CD8-positive, alpha-beta T cell (primary cell): ENCODE measurements at regions of chr2 and their contacts with region 1.

Region 1: DNA sequence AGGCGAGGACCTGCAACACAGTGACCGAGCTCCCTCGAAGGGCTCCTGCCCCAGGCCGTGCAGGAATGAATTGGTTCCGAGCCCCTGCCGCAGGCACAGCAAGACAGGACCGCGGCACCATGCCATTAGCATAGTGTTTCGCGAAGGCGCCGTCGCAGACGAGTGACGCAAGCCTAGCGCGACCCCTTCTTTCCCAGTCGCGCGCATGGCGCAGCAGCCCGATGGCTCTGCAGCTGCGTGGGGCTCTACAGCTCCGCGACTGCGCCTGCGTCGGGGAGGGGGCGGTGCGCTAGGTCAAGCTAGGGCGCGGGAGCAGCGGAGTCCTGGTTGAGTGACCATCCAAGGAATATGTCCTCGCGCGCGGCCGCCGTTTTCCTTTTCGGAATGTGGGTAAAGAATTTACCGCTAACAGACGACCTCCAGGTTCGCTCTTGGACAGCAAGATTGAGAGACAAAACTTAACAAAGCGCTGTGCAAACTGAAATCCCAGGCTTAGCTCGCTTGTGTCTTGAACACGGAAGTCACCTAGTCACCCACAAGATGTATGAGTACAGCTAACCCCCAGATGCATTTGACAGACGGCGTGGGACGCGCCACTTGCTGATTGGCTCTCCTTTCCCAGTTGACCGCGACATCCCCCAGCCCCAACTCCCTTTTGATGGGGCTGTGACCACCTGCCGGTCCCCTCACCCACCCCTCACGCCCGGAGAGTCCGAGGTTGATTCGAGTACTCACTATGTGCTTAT is at the start of gene TRMT61B:
- DNase-seq: peak; percentile 89 to 99 (median 97)
- ATAC-seq: peak; percentile 96
- H3K4me3 ChIP-seq: peak within 1 kb of the TSS; percentile 89 to 98
- H3K4me3 Mint-ChIP-seq: peak within 1 kb of the TSS; percentile 94
- H3K27ac ChIP-seq: peak within 1 kb of the TSS; percentile 94 to 95
- H3K27ac Mint-ChIP-seq: peak within 1 kb of the TSS; percentile 99
- H3K4me1 ChIP-seq: peaks cover 28% of the 10 kb centered on the region
- H3K4me1 Mint-ChIP-seq: peaks cover 33% of the 10 kb centered on the region
- H3K27me3 ChIP-seq: no peaks in the 10 kb centered on the region
- H3K27me3 Mint-ChIP-seq: no peaks in the 10 kb centered on the region
- CTCF ChIP-seq: no peak
- total RNA-seq, gene TRMT61B: 17.9 to 22.9 TPM

Region 2: DNA sequence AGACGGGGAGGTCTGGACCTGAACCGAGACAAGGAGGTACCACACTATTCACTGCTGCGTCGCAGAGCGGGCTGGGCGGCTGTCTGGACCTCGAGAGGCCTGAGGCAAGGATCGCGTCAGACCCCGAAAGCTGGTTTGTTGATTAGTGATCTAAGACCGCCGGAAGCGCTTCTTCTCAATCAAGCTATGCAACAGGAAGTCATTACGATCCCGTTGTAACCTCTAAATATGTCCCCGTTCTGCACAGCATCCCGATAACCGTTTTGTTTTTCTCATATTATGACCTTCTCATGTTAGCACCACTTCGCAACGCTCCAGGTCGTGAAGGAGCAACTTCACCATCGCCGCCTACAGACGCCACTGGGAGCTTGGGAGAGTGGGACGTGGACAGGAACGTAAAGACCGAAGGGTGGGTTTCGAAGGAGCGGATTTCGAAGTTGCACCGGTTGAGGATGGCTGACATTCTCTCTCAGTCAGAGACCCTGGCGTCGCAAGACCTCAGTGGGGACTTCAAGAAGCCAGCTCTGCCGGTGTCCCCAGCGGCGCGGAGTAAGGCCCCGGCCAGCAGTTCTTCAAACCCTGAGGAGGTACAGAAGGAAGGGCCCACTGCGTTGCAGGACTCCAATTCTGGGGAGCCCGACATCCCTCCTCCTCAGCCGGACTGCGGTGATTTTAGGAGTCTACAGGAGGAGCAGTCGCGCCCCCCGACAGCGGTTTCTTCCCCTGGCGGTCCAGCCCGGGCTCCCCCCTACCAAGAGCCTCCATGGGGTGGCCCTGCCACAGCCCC is 1206.7 kb before region 1 on chr2 and contains the starts of genes SLC4A1AP and SUPT7L:
- CTCF ChIA-PET with region 1: no interaction called
- POLR2A ChIA-PET with region 1: no interaction called
- intact Hi-C with region 1: loop called in 1 of 2 experiments (anchors 10 kb)
- DNase-seq: peak; percentile 54 to 90 (median 74)
- ATAC-seq: peak; percentile 81
- H3K4me3 ChIP-seq: peak within 1 kb of the TSS; percentile 96 to 99
- H3K4me3 Mint-ChIP-seq: peak within 1 kb of the TSS; percentile 100
- H3K27ac ChIP-seq: peak within 1 kb of the TSS; percentile 95 to 98
- H3K27ac Mint-ChIP-seq: peak within 1 kb of the TSS; percentile 100
- H3K4me1 ChIP-seq: peaks cover 28% of the 10 kb centered on the region
- H3K4me1 Mint-ChIP-seq: peaks cover 60% of the 10 kb centered on the region
- H3K27me3 ChIP-seq: no peaks in the 10 kb centered on the region
- H3K27me3 Mint-ChIP-seq: no peaks in the 10 kb centered on the region
- CTCF ChIP-seq: no peak
- total RNA-seq, gene SLC4A1AP: 21.4 to 22.8 TPM
- total RNA-seq, gene SUPT7L: 54.0 to 55.5 TPM

Region 3: GRCh38 chr2:28695245-28695647 is 175.1 kb before region 1 on chr2:
- CTCF ChIA-PET with region 1: no interaction called
- POLR2A ChIA-PET with region 1: no interaction called
- intact Hi-C with region 1: no loop called
- DNase-seq: no peak
- ATAC-seq: no peak
- H3K4me3 ChIP-seq: no peak overlapping the region
- H3K4me3 Mint-ChIP-seq: no peak overlapping the region
- H3K27ac ChIP-seq: no peak overlapping the region
- H3K27ac Mint-ChIP-seq: no peak overlapping the region
- H3K4me1 ChIP-seq: no peaks in the 10 kb centered on the region
- H3K4me1 Mint-ChIP-seq: no peaks in the 10 kb centered on the region
- H3K27me3 ChIP-seq: no peaks in the 10 kb centered on the region
- H3K27me3 Mint-ChIP-seq: no peaks in the 10 kb centered on the region
- CTCF ChIP-seq: no peak

Region 4: DNA sequence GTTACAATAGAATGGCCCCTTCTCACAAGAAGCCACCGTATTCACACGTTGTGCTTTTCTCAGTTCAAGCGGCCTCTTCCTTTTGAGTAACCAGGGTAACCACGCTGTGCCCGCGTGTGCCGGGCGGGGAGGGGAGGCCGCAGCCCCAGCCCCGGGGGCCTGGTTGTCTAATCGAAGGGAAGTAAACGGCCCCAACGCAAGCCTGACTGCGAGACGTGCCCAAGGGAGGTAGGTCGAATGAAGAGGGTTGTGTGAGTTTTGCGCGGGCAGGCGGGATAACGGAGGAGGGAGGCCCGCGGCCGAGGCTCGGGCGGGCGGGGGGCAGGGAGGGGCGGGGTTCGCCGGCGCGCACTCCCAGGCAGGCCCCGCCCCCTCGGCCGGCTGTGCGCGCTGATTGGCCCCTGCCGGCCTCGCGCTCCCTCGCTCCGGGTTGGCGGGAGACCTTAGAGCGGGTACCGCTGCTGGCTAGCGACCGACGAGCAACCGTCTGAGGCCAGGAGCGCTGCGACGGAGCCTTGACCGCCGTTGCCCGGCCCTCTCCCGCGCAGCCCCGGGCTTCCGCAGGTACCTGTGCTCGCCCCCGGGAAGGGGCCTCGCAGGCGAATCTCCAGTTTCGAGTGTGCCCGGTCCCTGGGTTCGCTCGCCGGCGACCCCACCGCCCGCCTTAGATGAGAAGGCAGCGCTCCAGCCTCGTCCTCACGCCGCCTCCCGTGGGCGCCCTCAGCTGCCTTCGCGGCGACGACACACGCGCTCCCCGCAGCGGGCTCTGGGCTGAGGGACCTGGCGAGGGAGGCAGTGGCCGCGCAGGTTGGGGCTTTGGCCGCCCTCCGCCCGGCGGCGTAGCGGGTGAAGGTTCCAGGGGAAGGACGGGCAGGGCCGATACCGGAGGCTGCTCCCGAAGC is 59.7 kb before region 1 on chr2 and contains the start of gene SPDYA:
- CTCF ChIA-PET with region 1: interaction called, 3 read pairs
- POLR2A ChIA-PET with region 1: interaction called, 3 read pairs
- intact Hi-C with region 1: loop called in 1 of 2 experiments (anchors 1 kb)
- DNase-seq: peak; percentile 52 to 89 (median 76)
- ATAC-seq: peak; percentile 92
- H3K4me3 ChIP-seq: peak within 1 kb of the TSS; percentile 62 to 69
- H3K4me3 Mint-ChIP-seq: peak within 1 kb of the TSS; percentile 86
- H3K27ac ChIP-seq: peak within 1 kb of the TSS; percentile 24 to 69
- H3K27ac Mint-ChIP-seq: no peak within 1 kb of the TSS
- H3K4me1 ChIP-seq: peaks cover 6% of the 10 kb centered on the region
- H3K4me1 Mint-ChIP-seq: peaks cover 18% of the 10 kb centered on the region
- H3K27me3 ChIP-seq: no peaks in the 10 kb centered on the region
- H3K27me3 Mint-ChIP-seq: no peaks in the 10 kb centered on the region
- CTCF ChIP-seq: no peak
- total RNA-seq, gene SPDYA: 11.8 to 12.4 TPM

Region 5: GRCh38 chr2:29115797-29116781 is 245.8 kb after region 1 on chr2:
- CTCF ChIA-PET with region 1: no interaction called
- POLR2A ChIA-PET with region 1: interaction called, 13 read pairs
- intact Hi-C with region 1: loop called in 1 of 2 experiments (anchors 2 kb)
- DNase-seq: peak; percentile 43 to 89 (median 73)
- ATAC-seq: peak; percentile 59
- H3K4me3 ChIP-seq: peak overlapping the region; percentile 80 to 82
- H3K4me3 Mint-ChIP-seq: peak overlapping the region; percentile 91
- H3K27ac ChIP-seq: peak overlapping the region; percentile 86 to 92
- H3K27ac Mint-ChIP-seq: peak overlapping the region; percentile 95
- H3K4me1 ChIP-seq: peaks cover 39% of the 10 kb centered on the region
- H3K4me1 Mint-ChIP-seq: peaks cover 54% of the 10 kb centered on the region
- H3K27me3 ChIP-seq: no peaks in the 10 kb centered on the region
- H3K27me3 Mint-ChIP-seq: no peaks in the 10 kb centered on the region
- CTCF ChIP-seq: no peak